ENCODE measurements at regions of chr17 and their contacts with region 1.

Region 1: GRCh38 chr17:66975604-66976384 is 11.3 kb downstream of the CACNG4 start:
- DNase-seq: no peak

Region 2: GRCh38 chr17:66715745-66716156 is 260.0 kb before region 1 on chr17:
- intact Hi-C with region 1: loop called (anchors 10 kb)
- DNase-seq: no peak

Region 3: GRCh38 chr17:67055811-67056745 is 80.3 kb after region 1 on chr17:
- intact Hi-C with region 1: loop called (anchors 10 kb)
- DNase-seq: peak; percentile 24

Region 4: GRCh38 chr17:67151717-67152116 is 175.9 kb after region 1 on chr17:
- intact Hi-C with region 1: no loop called
- DNase-seq: no peak